ENCODE measurements at regions of chr3 and their contacts with region 1.

Region 1: DNA sequence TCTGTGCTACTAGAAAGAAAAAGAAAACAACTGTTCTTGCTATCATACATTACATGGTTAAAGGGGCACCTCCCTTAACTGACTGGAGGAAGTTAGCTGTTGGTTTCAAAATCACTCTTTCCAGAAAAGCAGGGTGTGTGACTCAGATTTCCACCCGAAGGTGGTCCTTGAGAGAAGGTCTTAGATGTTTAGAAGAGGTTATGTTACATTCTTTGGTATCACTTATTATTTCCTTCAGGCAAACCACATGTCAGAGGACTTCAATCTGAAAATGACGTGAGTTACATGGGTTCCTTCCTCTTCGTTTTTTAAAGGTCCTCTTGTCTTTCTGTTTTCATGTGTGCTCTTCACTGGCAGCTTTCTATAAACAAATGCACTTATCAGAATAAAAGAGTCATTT is 307.9 kb upstream of the CBLB start:
- DNase-seq: peak; percentile 79
- H3K4me3 Mint-ChIP-seq: peak overlapping the region; percentile 38
- H3K27ac Mint-ChIP-seq: peak overlapping the region; percentile 93
- H3K4me1 Mint-ChIP-seq: peaks cover 59% of the 10 kb centered on the region
- H3K27me3 Mint-ChIP-seq: no peaks in the 10 kb centered on the region

Region 2: GRCh38 chr3:105752744-105753415 is 423.9 kb before region 1 on chr3:
- CTCF ChIA-PET with region 1: no interaction called
- intact Hi-C with region 1: loop called (anchors 2 kb)
- DNase-seq: peak; percentile 46
- H3K4me3 Mint-ChIP-seq: peak overlapping the region; percentile 42
- H3K27ac Mint-ChIP-seq: peak overlapping the region; percentile 92
- H3K4me1 Mint-ChIP-seq: peaks cover 77% of the 10 kb centered on the region
- H3K27me3 Mint-ChIP-seq: no peaks in the 10 kb centered on the region

Region 3: DNA sequence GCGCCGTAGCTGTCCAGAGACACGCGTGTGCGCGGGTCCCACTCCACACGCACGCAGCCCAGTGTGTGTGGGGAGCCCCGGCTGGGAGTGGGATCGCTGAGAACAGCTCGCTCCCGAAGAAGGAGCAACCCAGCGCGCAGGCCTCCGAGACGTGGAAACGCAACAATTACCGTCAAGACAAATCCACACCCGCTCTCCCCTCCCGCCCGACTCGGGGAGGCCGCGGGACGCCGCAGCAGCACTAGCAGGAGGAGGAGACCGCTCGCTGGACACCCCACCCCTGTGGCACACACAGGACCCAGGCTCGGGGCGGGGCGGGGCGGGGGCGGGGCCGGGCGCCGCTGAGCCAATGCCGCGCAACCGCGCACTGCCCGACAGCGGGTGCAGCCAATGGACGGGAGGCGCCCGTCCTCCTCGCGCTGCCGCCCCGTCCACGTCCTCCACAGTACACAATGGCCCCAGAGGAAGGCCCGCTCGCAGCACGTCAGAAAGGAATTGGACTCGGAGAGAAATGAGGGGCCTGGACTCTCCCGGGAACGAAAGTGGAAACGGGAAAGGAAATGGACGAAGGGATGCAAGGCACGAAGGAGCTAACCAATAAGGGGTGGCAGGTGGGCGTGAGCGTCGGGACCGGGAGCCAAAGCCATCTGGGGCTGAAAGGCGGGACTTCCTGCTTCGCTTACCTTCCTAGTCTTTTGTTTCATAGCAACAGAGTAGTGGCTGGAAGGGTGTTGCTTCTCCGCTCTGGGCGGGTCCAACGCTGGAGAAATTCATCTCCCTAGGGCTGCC is 307.8 kb before region 1 on chr3 and contains the start of gene CBLB:
- CTCF ChIA-PET with region 1: no interaction called
- intact Hi-C with region 1: loop called (anchors 1 kb)
- DNase-seq: peak; percentile 90
- H3K4me3 Mint-ChIP-seq: peak within 1 kb of the TSS; percentile 94
- H3K27ac Mint-ChIP-seq: peak within 1 kb of the TSS; percentile 93
- H3K4me1 Mint-ChIP-seq: peaks cover 29% of the 10 kb centered on the region
- H3K27me3 Mint-ChIP-seq: no peaks in the 10 kb centered on the region
- total RNA-seq, gene CBLB: 72.8 to 78.9 TPM

Region 4: DNA sequence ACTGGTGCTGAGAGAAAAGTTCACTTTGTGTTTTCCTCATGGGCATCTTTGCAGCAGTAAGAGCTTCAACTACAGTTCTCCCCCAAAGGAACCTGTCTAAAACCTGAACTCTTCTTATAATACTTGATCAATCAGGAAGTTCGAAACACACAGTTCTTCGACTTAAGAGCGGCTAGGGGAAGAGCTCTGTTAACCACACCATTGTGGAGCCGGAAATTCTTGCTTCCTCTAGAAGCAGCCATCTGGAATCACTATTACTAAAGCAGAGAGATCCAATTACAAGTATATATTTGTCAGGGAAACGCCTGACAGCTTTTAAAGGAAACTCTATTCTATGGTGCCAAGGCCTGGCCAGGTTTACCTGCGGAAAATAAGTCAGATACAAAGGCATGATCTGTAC is 29.4 kb after region 1 on chr3:
- CTCF ChIA-PET with region 1: interaction called, 5 read pairs
- intact Hi-C with region 1: loop called (anchors 1 kb)
- DNase-seq: peak; percentile 47
- H3K4me3 Mint-ChIP-seq: peak overlapping the region; percentile 55
- H3K27ac Mint-ChIP-seq: peak overlapping the region; percentile 98
- H3K4me1 Mint-ChIP-seq: peaks cover 55% of the 10 kb centered on the region
- H3K27me3 Mint-ChIP-seq: no peaks in the 10 kb centered on the region

Region 5: GRCh38 chr3:106423321-106424225 is 246.8 kb after region 1 on chr3:
- CTCF ChIA-PET with region 1: interaction called, 3 read pairs
- intact Hi-C with region 1: loop called (anchors 1 kb)
- DNase-seq: peak; percentile 55
- H3K4me3 Mint-ChIP-seq: no peak overlapping the region
- H3K27ac Mint-ChIP-seq: peak overlapping the region; percentile 80
- H3K4me1 Mint-ChIP-seq: peaks cover 46% of the 10 kb centered on the region
- H3K27me3 Mint-ChIP-seq: peaks cover 2% of the 10 kb centered on the region

Region 6: DNA sequence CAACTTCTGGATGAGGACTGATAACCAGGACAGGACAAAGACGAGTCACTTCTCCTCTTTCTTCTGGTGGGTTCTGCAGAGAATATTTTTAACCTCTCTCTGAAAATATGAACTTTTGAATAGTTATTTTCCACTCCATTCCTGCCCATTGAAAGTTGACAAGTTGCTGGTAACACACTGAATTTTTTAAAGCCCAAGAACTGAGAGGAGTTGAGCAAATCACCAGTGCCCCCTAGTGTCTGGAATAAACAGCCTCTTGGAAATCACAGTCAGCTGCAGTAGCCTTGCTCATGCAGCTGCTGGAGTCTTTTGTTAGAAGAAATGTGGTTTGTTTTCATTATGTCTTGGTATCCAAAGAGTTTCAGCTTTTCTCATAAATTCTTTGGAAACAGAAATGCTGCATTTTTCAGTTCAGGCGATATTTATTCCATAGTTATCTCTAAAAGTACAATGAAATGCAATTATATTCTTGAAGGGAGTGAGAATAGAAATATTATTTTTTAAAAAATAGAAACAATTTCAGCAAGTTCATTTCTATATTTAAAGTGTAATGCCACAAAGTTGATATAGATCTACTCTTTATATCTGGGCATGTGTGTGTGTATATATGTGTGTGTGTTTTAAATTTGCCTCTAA is 433.1 kb after region 1 on chr3:
- CTCF ChIA-PET with region 1: no interaction called
- intact Hi-C with region 1: loop called (anchors 5 kb)
- DNase-seq: peak; percentile 82
- H3K4me3 Mint-ChIP-seq: no peak overlapping the region
- H3K27ac Mint-ChIP-seq: no peak overlapping the region
- H3K4me1 Mint-ChIP-seq: peaks cover 21% of the 10 kb centered on the region
- H3K27me3 Mint-ChIP-seq: no peaks in the 10 kb centered on the region

Region 7: GRCh38 chr3:106635271-106635670 is 458.5 kb after region 1 on chr3:
- CTCF ChIA-PET with region 1: no interaction called
- intact Hi-C with region 1: no loop called
- DNase-seq: no peak
- H3K4me3 Mint-ChIP-seq: no peak overlapping the region
- H3K27ac Mint-ChIP-seq: no peak overlapping the region
- H3K4me1 Mint-ChIP-seq: no peaks in the 10 kb centered on the region
- H3K27me3 Mint-ChIP-seq: peaks cover 5% of the 10 kb centered on the region